CD8-positive, alpha-beta memory T cell (primary cell): ENCODE measurements at regions of chr6 and their contacts with region 1.

Region 1: DNA sequence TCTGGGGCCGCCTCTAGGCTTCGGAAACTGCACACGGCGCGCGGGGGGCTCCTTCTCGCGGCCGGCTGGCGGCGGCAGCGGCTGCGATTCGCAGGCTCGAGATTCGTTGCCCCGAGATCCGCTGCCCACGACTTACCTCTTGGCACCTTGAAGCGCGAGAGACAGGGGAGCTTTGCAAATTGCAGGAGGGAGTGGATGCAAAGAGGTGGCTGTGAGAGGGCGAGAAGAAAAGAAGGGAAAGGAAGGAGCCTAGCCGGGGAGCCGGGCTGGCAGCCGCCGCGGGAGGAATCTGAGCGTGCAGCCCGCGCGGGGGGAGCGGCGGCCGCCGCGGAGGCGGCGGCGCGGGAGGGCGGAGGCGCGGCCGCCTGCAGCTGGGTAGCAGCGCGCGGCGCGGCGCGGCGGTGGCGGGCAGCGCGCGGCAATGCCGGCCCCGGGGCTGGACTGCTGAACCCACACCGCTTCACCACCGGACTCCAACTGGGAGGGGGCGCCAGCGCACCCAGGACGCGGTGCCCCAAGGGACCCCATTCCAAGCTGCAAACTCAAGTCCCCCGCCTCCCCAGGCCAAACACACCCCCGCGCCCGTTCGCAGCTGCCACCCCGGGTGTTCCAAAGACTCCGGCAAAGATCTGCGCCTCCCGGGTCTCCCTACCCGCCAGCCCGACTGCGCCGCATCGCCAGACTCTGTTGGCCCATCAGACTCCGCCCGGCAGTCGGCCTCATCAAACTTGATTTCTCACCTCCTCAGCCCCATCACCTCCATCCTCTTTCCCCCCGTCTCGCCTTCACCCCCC is 44.2 kb upstream of the SUPT3H start:
- DNase-seq: peak; percentile 41 to 64 (median 56)
- H3K4me3 ChIP-seq: peak overlapping the region; percentile 68
- H3K4me3 Mint-ChIP-seq: peak overlapping the region; percentile 91 to 100 (median 98)
- H3K27ac ChIP-seq: peak overlapping the region; percentile 45
- H3K27ac Mint-ChIP-seq: peak overlapping the region; percentile 88 to 100 (median 96)
- H3K4me1 ChIP-seq: peaks cover 24% of the 10 kb centered on the region
- H3K4me1 Mint-ChIP-seq: peaks cover 41 to 54% (median 53%) of the 10 kb centered on the region in 3 donors
- H3K27me3 ChIP-seq: peaks cover 7% of the 10 kb centered on the region
- H3K27me3 Mint-ChIP-seq: peaks cover 20 to 22% of the 10 kb centered on the region in 2 donors

Region 2: DNA sequence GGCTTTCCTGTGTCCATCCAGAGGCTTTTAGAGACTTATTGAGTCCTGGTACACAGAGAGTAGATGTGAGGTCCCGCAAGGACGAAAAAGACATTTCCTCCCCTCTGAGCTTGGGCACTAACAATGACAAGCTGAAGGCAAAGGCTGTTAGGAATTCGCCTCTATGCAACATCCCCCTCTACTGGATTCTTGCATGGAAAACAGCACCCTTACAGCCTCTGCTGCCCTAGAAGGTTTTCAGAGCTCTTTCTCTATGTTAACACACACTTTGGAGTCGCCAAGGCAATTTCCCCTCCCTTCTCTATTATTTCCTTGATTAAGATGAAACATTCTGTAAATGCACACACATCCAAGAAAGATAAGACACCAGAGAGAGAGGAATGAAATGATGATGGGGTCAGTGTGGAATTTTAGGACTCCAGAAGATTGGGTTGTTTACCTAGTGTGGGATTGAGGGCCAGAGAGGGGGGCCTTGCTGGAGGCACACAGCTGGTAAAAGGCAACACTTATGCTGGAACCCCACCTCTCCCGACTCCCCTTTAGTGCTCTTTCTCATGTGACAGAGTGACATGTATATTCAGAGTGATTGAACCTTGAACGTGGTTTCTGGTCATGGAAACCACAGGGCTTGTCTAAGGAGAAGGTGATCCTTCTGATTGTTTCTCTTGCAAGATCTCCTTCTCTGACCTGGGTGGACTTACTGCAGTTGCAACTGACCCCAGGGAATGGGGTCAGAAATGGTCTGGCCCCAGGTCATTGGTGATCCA is 293.0 kb after region 1 on chr6:
- CTCF ChIA-PET with region 1: interaction called, 22 read pairs
- POLR2A ChIA-PET with region 1: interaction called, 7 read pairs
- DNase-seq: peak; percentile 8 to 65 (median 57)
- H3K4me3 ChIP-seq: no peak overlapping the region
- H3K4me3 Mint-ChIP-seq: peak overlapping the region in 6 of 7 donors; percentile 35 to 67 (median 58)
- H3K27ac ChIP-seq: no peak overlapping the region
- H3K27ac Mint-ChIP-seq: peak overlapping the region in 3 of 8 donors; percentile 35 to 49 (median 42)
- H3K4me1 ChIP-seq: peaks cover 5% of the 10 kb centered on the region
- H3K4me1 Mint-ChIP-seq: peaks cover 10 to 29% (median 23%) of the 10 kb centered on the region in 3 donors
- H3K27me3 ChIP-seq: no peaks in the 10 kb centered on the region
- H3K27me3 Mint-ChIP-seq: peaks cover 0 to 7% of the 10 kb centered on the region in 2 donors